Lower lobe of right lung (tissue), 2 donors: ENCODE measurements at regions of chr10 and their contacts with region 1.

Region 1: GRCh38 chr10:21495752-21496342 is 29.6 kb downstream of the SKIDA1 start:
- DNase-seq: peak; percentile 89
- ATAC-seq: peak; percentile 92 to 96
- H3K4me3 ChIP-seq: peak overlapping the region; percentile 79
- H3K27ac ChIP-seq: peak overlapping the region; percentile 53
- H3K4me1 ChIP-seq: peaks cover 41% of the 10 kb centered on the region
- H3K27me3 ChIP-seq: peaks cover 33% of the 10 kb centered on the region
- CTCF ChIP-seq: peak; percentile 99

Region 2: DNA sequence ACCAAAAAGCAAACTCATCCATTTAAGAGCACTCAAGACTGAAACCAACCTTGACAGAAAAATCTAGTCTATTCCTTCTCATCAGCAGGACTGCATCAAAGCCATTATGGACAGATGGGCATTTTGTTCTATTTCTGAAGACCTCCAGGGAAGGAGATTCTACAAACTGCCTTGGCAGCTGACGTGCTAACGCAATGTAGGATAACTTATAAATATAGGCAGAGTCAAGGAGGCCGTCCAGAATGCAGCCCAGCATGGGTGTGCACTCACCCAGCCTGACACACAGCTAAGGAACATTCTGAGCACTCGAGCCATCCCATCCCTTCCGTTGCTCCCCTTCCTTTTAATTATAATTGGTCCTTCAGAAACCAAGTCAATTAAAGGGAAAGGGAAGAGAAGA is 573.4 kb before region 1 on chr10:
- intact Hi-C with region 1: no loop called
- DNase-seq: no peak
- ATAC-seq: no peak
- H3K4me3 ChIP-seq: no peak overlapping the region
- H3K27ac ChIP-seq: no peak overlapping the region
- H3K4me1 ChIP-seq: no peaks in the 10 kb centered on the region
- H3K27me3 ChIP-seq: no peaks in the 10 kb centered on the region
- CTCF ChIP-seq: no peak

Region 3: GRCh38 chr10:21600804-21601512 is 105.1 kb after region 1 on chr10:
- intact Hi-C with region 1: loop called (anchors 10 kb)
- DNase-seq: no peak
- ATAC-seq: no peak
- H3K4me3 ChIP-seq: no peak overlapping the region
- H3K27ac ChIP-seq: no peak overlapping the region
- H3K4me1 ChIP-seq: peaks cover 11% of the 10 kb centered on the region
- H3K27me3 ChIP-seq: no peaks in the 10 kb centered on the region
- CTCF ChIP-seq: no peak